Left ventricle myocardium superior (tissue), 1 donor: ENCODE measurements at regions of chr6 and their contacts with region 1.

Region 1: DNA sequence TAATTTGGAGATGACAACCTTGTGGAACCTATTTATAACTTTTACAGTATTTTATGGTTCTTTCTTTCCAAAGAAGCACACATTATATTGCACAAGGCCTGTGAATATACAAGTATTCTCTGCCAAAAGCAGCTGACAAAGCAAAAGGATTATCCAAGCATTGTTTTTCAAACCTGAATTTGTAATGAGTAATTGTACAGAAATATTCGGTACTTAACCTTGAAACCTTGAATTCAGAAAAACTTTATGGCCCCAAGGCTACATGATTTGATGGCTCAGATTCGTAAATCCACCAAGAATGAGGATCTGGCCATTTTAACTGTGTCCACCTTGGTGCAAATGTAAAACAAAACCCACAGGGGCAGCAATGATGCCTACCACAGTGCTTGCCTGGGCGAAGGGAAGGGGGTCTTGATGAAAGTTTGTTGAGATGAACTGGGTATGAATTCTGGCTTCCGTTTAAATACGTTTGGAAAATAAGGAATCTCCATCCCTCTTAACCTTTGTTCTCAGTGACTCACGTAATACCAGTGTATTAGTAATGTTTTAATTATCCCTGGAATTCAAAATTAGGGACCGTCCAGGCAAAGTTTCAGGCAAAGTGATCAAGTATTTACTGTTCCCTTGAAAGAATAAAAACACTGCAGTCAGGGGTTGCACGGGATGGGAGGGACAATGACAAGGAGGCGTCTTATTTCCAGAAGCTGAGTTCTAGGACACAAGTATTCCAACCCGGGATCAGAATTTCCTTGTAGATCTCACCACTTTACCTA is 2.7 kb upstream of the RBM24 start:
- DNase-seq: no peak
- ATAC-seq: no peak

Region 2: DNA sequence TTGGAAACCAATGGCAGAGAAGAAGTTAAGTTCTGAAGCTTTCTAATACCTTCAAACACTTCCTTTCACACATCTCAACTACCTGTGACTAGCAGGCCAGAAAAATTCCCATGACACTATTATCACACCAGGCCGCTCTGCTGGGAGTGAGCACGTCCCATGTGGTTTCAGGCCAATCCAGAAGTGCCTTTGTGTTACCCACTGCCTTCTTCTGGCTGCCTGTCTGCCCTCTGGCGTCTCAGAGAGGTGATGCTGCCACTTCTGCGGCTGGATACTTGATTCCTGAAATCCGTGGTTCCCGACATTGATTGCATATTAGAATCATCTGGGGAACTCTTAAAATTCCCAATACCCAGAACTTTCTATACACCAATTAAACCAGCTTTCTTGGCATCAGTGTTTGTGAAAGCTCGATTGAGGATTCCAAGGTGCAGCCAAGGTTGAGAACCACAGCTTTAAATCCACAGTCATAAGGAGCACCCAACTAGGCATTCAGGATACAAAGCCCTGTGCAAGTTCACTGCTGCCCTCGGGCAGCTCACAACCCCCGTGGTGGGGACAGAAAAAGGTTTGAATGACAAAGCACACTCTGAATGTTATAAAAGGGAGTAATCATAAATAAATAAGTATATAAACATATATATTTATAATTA is 111.0 kb before region 1 on chr6:
- intact Hi-C with region 1: loop called (anchors 10 kb)
- DNase-seq: peak; percentile 69
- ATAC-seq: peak; percentile 98

Region 3: GRCh38 chr6:17212546-17213371 is 65.7 kb before region 1 on chr6:
- intact Hi-C with region 1: no loop called
- DNase-seq: peak; percentile 64
- ATAC-seq: peak; percentile 89

Region 4: GRCh38 chr6:17365977-17366376 is 87.5 kb after region 1 on chr6:
- intact Hi-C with region 1: no loop called
- DNase-seq: no peak
- ATAC-seq: no peak